Activated CD4-positive, alpha-beta memory T cell treated with anti-CD3 and anti-CD28 coated beads for 36 hours (primary cell): ENCODE measurements at regions of chr1 and their contacts with region 1.

Region 1: GRCh38 chr1:180863158-180863775 is 49.4 kb upstream of the KIAA1614 start:
- DNase-seq: no peak
- H3K4me3 Mint-ChIP-seq: no peak overlapping the region
- H3K27ac Mint-ChIP-seq: no peak overlapping the region
- H3K4me1 Mint-ChIP-seq: no peaks in the 10 kb centered on the region
- H3K27me3 Mint-ChIP-seq: no peaks in the 10 kb centered on the region

Region 2: DNA sequence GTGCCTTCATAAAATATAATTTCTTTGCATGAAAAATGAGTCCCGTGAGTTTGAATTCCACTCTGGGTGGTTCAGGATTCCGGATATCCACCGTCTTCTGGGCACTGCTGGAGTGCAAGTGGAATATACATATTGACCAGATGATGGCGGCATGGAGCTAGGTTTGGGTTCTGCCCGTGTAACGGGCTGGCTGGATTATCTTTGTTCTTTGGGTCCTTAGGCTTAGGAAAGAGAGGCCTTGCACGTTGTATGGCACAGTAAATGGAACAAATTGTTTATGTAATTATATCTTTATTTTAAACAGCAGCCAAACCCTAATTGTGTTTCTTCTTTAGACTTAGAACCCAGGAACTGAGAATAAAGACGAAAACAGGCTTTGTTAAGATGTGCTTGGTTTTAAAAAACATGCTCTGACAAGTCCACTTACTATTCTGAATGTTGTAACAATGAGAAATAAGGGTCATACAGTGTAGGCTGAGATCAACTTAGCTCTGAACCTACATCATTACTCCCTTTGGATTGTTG is 347.3 kb before region 1 on chr1:
- CTCF ChIA-PET with region 1: interaction called, 133 read pairs
- POLR2A ChIA-PET with region 1: no interaction called
- intact Hi-C with region 1: loop called (anchors 1 kb)
- DNase-seq: peak; percentile 66
- H3K4me3 Mint-ChIP-seq: no peak overlapping the region
- H3K27ac Mint-ChIP-seq: no peak overlapping the region
- H3K4me1 Mint-ChIP-seq: no peaks in the 10 kb centered on the region
- H3K27me3 Mint-ChIP-seq: peaks cover 5% of the 10 kb centered on the region

Region 3: GRCh38 chr1:180533266-180533987 is 329.8 kb before region 1 on chr1:
- CTCF ChIA-PET with region 1: interaction called, 192 read pairs
- POLR2A ChIA-PET with region 1: no interaction called
- intact Hi-C with region 1: loop called (anchors 5 kb)
- DNase-seq: peak; percentile 81
- H3K4me3 Mint-ChIP-seq: no peak overlapping the region
- H3K27ac Mint-ChIP-seq: no peak overlapping the region
- H3K4me1 Mint-ChIP-seq: no peaks in the 10 kb centered on the region
- H3K27me3 Mint-ChIP-seq: peaks cover 8% of the 10 kb centered on the region

Region 4: GRCh38 chr1:180851995-180852887 is 11.0 kb before region 1 on chr1:
- CTCF ChIA-PET with region 1: interaction called, 16 read pairs
- POLR2A ChIA-PET with region 1: no interaction called
- intact Hi-C with region 1: no loop called
- DNase-seq: no peak
- H3K4me3 Mint-ChIP-seq: no peak overlapping the region
- H3K27ac Mint-ChIP-seq: no peak overlapping the region
- H3K4me1 Mint-ChIP-seq: peaks cover 16% of the 10 kb centered on the region
- H3K27me3 Mint-ChIP-seq: no peaks in the 10 kb centered on the region

Region 5: GRCh38 chr1:180888870-180889269 is 25.6 kb after region 1 on chr1:
- CTCF ChIA-PET with region 1: no interaction called
- POLR2A ChIA-PET with region 1: no interaction called
- intact Hi-C with region 1: no loop called
- DNase-seq: no peak
- H3K4me3 Mint-ChIP-seq: no peak overlapping the region
- H3K27ac Mint-ChIP-seq: no peak overlapping the region
- H3K4me1 Mint-ChIP-seq: no peaks in the 10 kb centered on the region
- H3K27me3 Mint-ChIP-seq: no peaks in the 10 kb centered on the region

Region 6: GRCh38 chr1:181239086-181239485 is 375.8 kb after region 1 on chr1:
- CTCF ChIA-PET with region 1: no interaction called
- POLR2A ChIA-PET with region 1: no interaction called
- intact Hi-C with region 1: no loop called
- DNase-seq: no peak
- H3K4me3 Mint-ChIP-seq: no peak overlapping the region
- H3K27ac Mint-ChIP-seq: no peak overlapping the region
- H3K4me1 Mint-ChIP-seq: no peaks in the 10 kb centered on the region
- H3K27me3 Mint-ChIP-seq: no peaks in the 10 kb centered on the region